Naive thymus-derived CD8-positive, alpha-beta T cell (primary cell): ENCODE measurements at regions of chr7 and their contacts with region 1.

Region 1: DNA sequence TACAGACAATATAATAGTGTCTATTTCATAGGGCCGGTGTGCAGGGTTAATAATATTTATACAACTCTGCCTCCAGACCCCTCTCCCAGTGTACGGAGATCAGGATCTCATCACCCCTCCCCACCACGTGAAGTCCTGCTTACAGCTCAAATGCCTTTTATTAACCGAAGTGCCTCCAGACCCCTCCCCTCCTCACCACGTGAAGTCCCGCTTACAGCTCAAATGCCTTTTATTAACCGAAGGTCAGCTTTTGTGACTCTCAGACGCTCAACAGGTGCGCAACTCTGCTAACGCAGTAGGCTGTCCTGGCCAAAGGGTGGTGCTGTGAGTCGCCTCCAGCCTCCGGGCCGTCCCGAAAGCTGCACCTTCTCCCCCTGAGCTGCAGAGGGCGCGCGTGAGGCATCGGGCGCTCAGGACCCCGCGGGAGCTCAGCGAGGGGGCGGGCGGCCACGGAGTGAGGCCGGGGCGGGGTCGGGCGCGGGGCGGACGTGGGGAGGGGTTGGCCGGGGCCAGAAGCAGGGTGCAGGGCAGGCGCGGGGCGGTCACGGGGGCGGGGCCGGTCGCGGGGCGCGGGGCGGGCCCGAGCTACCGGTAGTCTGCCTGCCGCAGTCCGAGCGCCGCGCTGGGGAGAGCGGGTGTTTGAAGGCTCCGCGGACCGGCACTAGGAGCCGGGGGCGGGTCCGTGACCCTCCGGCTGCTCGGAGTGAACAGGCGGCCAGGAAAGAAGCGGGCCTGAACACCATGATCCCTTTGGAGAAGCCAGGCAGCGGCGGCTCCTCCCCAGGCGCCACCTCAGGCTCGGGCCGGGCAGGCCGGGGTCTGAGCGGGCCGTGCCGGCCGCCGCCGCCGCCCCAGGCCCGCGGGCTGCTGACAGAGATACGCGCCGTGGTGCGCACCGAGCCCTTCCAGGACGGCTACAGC is at the start of gene STK17A:
- DNase-seq: peak; percentile 90 to 99 (median 96)
- ATAC-seq: peak; percentile 63 to 66
- H3K4me3 Mint-ChIP-seq: peak within 1 kb of the TSS; percentile 82 to 99 (median 94)
- H3K27ac Mint-ChIP-seq: peak within 1 kb of the TSS; percentile 90 to 99 (median 96)
- H3K4me1 Mint-ChIP-seq: peaks cover 5 to 33% (median 17%) of the 10 kb centered on the region in 4 donors
- H3K27me3 Mint-ChIP-seq: peaks cover 0 to 9% (median 3%) of the 10 kb centered on the region in 5 donors
- polyA plus RNA-seq, gene STK17A: 242 to 346 (median 262) TPM

Region 2: DNA sequence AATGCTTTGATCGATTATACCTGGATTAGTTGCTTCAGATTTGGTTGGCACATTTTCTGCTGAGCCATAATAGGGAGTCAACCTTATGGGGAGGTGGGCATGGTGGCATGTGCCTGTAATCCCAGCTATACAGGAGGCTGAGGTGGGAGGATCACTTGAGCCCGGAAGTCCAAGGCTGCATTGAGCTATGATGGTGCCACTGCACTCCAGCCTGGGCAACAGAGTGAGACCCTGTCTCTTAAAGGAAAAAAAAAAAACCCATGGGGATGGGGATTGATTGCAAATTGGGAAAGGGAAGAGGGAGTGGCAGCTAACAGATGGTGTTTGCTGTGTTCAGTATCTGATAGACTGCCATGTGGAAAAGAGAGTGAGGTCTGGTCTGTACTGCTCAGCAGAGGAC is 11.3 kb after region 1 on chr7:
- POLR2A ChIA-PET with region 1: interaction called, 22 read pairs
- DNase-seq: no peak
- ATAC-seq: peak in 1 of 2 donors; percentile 4
- H3K4me3 Mint-ChIP-seq: peak overlapping the region; percentile 66 to 92 (median 84)
- H3K27ac Mint-ChIP-seq: peak overlapping the region; percentile 83 to 96 (median 92)
- H3K4me1 Mint-ChIP-seq: peaks cover 35 to 89% (median 82%) of the 10 kb centered on the region in 4 donors
- H3K27me3 Mint-ChIP-seq: no peaks in the 10 kb centered on the region

Region 3: DNA sequence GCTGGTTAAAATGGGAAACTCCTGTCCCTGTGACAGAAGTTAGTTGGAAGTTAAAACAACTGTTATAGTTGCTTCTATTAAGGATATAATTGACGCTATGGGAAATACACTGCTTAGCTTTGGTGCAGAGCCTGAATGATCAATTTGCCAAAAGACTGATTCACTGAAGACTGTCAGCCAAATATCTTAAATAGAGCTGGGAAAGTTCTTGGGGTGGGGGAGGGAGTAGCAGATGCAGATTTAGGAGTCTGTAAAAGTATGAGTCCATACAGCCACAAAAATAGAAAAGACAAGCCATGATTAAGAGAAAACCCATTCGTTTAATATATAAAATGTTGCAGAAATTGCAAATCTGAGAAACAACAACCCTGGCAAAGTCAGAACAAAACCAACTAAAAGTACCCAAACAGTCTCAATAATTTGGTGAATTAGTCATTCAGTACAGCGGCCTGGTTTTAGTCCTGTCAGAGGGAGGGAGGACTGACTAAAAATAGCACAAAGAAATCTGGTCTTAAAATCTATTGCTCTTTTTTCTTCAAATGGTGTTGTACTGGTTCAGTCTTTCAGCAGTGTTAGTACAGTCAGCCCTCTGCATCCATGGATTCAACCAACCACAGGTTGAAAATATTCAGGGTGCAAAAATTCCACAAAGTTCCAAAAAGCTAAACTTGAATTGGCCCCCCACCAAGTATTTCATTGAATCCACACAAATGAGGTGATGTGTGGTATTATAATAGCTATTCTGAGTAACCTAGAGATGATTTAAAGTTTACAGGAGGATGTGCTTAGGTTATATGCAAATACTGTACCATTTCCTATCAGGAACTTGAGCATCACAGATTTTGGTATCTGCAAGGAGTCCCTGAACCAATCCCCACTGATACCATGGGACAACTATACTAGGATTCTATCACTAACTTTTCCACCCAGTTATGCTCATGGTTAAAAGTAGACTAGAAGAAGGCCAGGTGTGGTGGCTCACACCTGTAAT is 30.1 kb after region 1 on chr7:
- POLR2A ChIA-PET with region 1: interaction called, 46 read pairs
- DNase-seq: no peak
- ATAC-seq: peak; percentile 29 to 40
- H3K4me3 Mint-ChIP-seq: peak overlapping the region; percentile 8 to 73 (median 55)
- H3K27ac Mint-ChIP-seq: peak overlapping the region in 9 of 10 donors; percentile 72 to 93 (median 90)
- H3K4me1 Mint-ChIP-seq: peaks cover 39 to 77% (median 54%) of the 10 kb centered on the region in 4 donors
- H3K27me3 Mint-ChIP-seq: no peaks in the 10 kb centered on the region

Region 4: GRCh38 chr7:43630482-43630881 is 47.7 kb after region 1 on chr7:
- POLR2A ChIA-PET with region 1: interaction called, 61 read pairs
- DNase-seq: no peak
- ATAC-seq: no peak
- H3K4me3 Mint-ChIP-seq: peak overlapping the region; percentile 13 to 83 (median 73)
- H3K27ac Mint-ChIP-seq: peak overlapping the region in 9 of 10 donors; percentile 91 to 99 (median 95)
- H3K4me1 Mint-ChIP-seq: peaks cover 45 to 94% (median 94%) of the 10 kb centered on the region in 4 donors
- H3K27me3 Mint-ChIP-seq: peaks cover 0 to under 1% (median 0%) of the 10 kb centered on the region in 5 donors

Region 5: DNA sequence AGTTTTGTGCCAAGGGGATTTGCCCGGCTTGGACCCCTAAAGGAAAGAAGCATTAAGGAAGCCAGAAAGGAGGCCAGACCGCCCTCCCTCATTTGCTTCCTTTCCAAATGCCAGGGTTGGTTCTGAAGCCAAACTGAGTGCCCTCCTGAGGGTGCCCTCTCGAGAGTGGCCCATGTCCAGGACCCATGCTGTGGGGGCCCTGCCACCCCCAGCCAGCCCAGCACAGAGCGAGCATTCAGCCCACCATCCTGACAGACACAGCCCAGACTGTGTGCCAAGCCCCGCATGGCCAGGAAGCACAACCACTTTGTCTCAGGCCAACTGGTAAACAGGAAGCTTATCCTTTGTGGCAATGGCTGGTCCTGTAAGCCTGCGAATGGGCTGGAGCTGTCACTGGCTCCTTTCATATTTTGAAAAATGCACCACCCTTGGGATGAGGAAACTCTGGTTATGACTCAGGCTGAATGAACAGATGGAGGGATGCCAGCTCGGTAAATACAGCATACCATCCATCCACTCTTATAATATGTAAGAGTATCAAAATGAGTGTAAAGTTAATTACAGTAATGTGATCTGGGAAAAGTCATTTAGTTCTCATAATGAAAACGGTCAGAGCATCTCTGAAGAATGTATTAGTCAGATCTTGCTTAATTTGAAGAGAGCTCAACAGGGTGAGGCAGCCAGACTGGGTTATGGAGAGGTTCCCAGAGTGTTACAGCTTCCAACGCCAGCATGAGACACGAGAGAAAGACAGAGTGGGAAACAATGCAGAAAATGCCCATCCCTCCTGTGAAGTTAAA is 65.1 kb after region 1 on chr7:
- POLR2A ChIA-PET with region 1: interaction called, 373 read pairs
- DNase-seq: peak in 2 of 10 donors; percentile 27 to 36
- ATAC-seq: peak in 1 of 2 donors; percentile 10
- H3K4me3 Mint-ChIP-seq: peak overlapping the region; percentile 77 to 91 (median 86)
- H3K27ac Mint-ChIP-seq: peak overlapping the region in 9 of 10 donors; percentile 93 to 100 (median 99)
- H3K4me1 Mint-ChIP-seq: peaks cover 47 to 98% (median 93%) of the 10 kb centered on the region in 4 donors
- H3K27me3 Mint-ChIP-seq: no peaks in the 10 kb centered on the region

Region 6: GRCh38 chr7:43693687-43694398 is 111.1 kb after region 1 on chr7:
- POLR2A ChIA-PET with region 1: interaction called, 192 read pairs
- DNase-seq: no peak
- ATAC-seq: no peak
- H3K4me3 Mint-ChIP-seq: no peak overlapping the region
- H3K27ac Mint-ChIP-seq: no peak overlapping the region
- H3K4me1 Mint-ChIP-seq: peaks cover 12 to 34% (median 31%) of the 10 kb centered on the region in 4 donors
- H3K27me3 Mint-ChIP-seq: no peaks in the 10 kb centered on the region

Region 7: GRCh38 chr7:43721193-43721806 is 138.5 kb after region 1 on chr7:
- POLR2A ChIA-PET with region 1: interaction called, 13 read pairs
- DNase-seq: peak in 5 of 10 donors; percentile 10 to 68 (median 61)
- ATAC-seq: no peak
- H3K4me3 Mint-ChIP-seq: no peak overlapping the region
- H3K27ac Mint-ChIP-seq: peak overlapping the region in 4 of 10 donors; percentile 6 to 75 (median 54)
- H3K4me1 Mint-ChIP-seq: peaks cover 22 to 71% (median 56%) of the 10 kb centered on the region in 4 donors
- H3K27me3 Mint-ChIP-seq: no peaks in the 10 kb centered on the region